Endothelial cell of umbilical vein (primary cell): ENCODE measurements at regions of chr2 and their contacts with region 1.

Region 1: GRCh38 chr2:46812361-46813024 is 103.1 kb downstream of the MCFD2 start:
- DNase-seq: peak; percentile 54
- H3K4me3 ChIP-seq: no peak overlapping the region
- H3K27ac ChIP-seq: no peak overlapping the region
- H3K4me1 ChIP-seq: peaks cover 17% of the 10 kb centered on the region
- H3K27me3 ChIP-seq: no peaks in the 10 kb centered on the region
- CTCF ChIP-seq: no peak
- POLR2A ChIP-seq: no peak

Region 2: DNA sequence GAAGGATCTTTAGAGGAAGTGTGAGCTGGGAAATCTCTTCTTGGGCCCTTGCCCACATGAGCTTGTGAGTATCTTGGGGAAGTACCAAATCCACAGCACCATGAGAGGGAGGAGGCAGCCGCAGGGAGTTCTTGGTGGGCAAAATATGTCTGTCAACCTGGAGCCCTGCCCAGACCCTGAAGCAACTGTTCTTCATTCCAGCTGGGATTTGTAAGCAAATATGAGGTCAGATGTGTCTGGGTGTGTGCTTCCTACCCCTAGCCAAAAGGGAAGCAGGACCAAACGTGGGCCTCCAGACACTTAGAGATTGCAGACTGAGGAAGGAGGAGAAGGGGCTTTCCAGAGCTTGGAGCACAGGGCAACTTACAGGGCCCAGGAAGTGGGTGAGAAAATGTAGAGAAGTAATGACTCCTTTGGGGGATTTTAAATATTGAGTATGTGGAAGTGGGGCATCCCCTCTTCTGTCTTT is 291.2 kb before region 1 on chr2:
- CTCF ChIA-PET with region 1: no interaction called
- POLR2A ChIA-PET with region 1: no interaction called
- dilution Hi-C with region 1: no loop called
- intact Hi-C with region 1: no loop called
- DNase-seq: no peak
- H3K4me3 ChIP-seq: no peak overlapping the region
- H3K27ac ChIP-seq: no peak overlapping the region
- H3K4me1 ChIP-seq: no peaks in the 10 kb centered on the region
- H3K27me3 ChIP-seq: no peaks in the 10 kb centered on the region
- CTCF ChIP-seq: no peak
- POLR2A ChIP-seq: no peak

Region 3: DNA sequence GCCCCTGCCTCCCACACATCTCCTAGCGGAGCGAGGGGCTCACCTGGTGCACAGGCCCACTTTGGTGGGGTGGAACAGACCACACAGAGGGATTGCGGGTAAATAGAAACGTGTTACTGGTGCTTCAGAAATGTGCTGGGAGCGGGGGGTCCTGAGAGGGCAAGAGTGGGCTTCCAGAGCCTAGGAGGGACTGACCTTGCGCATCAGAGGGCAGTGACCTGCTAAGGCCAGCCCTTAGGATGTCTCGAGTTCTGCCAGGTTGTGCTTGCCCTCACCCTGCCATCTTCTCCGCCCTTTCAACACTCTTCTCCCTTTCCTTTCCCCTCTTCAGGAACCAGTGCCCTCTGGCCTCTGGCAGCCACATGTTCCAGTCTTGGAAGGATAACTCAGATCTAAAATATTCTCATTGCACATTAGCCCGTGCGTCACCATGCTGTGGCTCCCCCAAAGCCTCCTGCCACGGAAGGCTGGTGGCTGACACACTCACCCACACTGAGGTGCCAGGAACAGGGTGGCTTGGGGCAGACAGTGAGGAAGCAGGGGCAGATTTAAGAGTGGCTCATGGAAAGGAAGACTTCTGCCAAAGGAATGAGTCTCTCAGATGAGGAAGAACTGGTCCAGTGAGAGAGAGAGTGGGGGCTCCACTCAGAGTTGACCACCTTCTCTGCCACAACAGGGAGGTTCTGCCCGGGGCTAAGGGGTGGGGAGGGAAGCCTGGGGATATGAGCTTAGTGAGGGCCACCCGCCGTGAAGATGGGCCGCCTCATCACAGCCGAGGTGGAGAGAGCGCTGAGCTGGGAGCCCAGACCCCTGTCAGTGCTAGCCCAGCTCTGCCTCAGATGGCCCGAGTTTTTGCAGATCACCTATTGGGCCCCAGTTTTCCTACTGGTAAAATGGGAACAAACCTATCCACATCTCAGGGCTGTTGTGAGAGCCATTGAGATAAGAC is 13.7 kb after region 1 on chr2:
- CTCF ChIA-PET with region 1: interaction called, 21 read pairs
- POLR2A ChIA-PET with region 1: no interaction called
- dilution Hi-C with region 1: no loop called
- intact Hi-C with region 1: no loop called
- DNase-seq: no peak
- H3K4me3 ChIP-seq: no peak overlapping the region
- H3K27ac ChIP-seq: no peak overlapping the region
- H3K4me1 ChIP-seq: no peaks in the 10 kb centered on the region
- H3K27me3 ChIP-seq: no peaks in the 10 kb centered on the region
- CTCF ChIP-seq: no peak
- POLR2A ChIP-seq: no peak

Region 4: GRCh38 chr2:46847235-46848068 is 35.0 kb after region 1 on chr2:
- CTCF ChIA-PET with region 1: interaction called, 7 read pairs
- POLR2A ChIA-PET with region 1: no interaction called
- dilution Hi-C with region 1: no loop called
- intact Hi-C with region 1: loop called (anchors 5 kb)
- DNase-seq: peak; percentile 96
- H3K4me3 ChIP-seq: no peak overlapping the region
- H3K27ac ChIP-seq: peak overlapping the region; percentile 16
- H3K4me1 ChIP-seq: peaks cover 46% of the 10 kb centered on the region
- H3K27me3 ChIP-seq: no peaks in the 10 kb centered on the region
- CTCF ChIP-seq: no peak
- POLR2A ChIP-seq: no peak